ENCODE measurements at regions of chr10 and their contacts with region 1.

Region 1: GRCh38 chr10:91198781-91199180 is 21.7 kb upstream of the PCGF5 start:
- DNase-seq: no peak
- H3K4me3 Mint-ChIP-seq: peak overlapping the region; percentile 1
- H3K27ac Mint-ChIP-seq: peak overlapping the region; percentile 76
- H3K4me1 Mint-ChIP-seq: peaks cover 73% of the 10 kb centered on the region
- H3K27me3 Mint-ChIP-seq: no peaks in the 10 kb centered on the region

Region 2: GRCh38 chr10:90999512-91000172 is 199.1 kb before region 1 on chr10:
- intact Hi-C with region 1: no loop called
- DNase-seq: no peak
- H3K4me3 Mint-ChIP-seq: no peak overlapping the region
- H3K27ac Mint-ChIP-seq: no peak overlapping the region
- H3K4me1 Mint-ChIP-seq: no peaks in the 10 kb centered on the region
- H3K27me3 Mint-ChIP-seq: peaks cover 26% of the 10 kb centered on the region

Region 3: DNA sequence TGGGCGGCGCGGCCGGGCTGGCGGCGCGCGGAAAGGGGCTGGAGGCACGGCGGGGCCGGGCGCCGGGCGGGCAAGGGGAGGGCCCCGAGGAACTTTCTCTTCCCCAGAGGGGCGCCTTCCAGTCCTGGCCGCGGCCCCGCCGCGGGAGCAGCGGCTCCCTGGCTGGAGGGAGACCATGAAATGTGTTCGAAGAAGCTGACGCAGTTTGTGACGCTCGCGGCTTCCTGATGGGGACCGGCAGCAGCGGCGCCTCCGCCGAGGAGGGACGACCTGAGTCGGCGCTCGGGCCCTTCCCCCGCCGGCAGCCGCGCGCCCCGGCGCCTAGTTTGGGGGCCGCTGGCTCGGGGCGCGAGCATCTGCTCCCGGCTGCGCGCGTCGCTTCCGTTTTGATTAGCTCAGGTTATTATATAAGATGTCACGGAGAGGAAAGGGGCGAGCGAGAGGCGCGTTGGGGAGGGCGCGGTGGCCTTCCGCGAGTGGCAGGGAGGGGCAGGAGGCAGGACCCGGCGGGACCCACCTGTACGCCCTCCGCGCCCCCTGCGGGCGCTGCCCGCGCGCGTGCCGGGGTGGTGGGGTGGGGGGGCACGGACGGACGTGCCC is 35.4 kb before region 1 on chr10:
- intact Hi-C with region 1: loop called (anchors 1 kb)
- DNase-seq: peak; percentile 70
- H3K4me3 Mint-ChIP-seq: peak overlapping the region; percentile 85
- H3K27ac Mint-ChIP-seq: peak overlapping the region; percentile 76
- H3K4me1 Mint-ChIP-seq: peaks cover 34% of the 10 kb centered on the region
- H3K27me3 Mint-ChIP-seq: no peaks in the 10 kb centered on the region

Region 4: GRCh38 chr10:91210435-91210834 is 11.7 kb after region 1 on chr10:
- intact Hi-C with region 1: loop called (anchors 1 kb)
- DNase-seq: no peak
- H3K4me3 Mint-ChIP-seq: no peak overlapping the region
- H3K27ac Mint-ChIP-seq: no peak overlapping the region
- H3K4me1 Mint-ChIP-seq: peaks cover 42% of the 10 kb centered on the region
- H3K27me3 Mint-ChIP-seq: no peaks in the 10 kb centered on the region

Region 5: DNA sequence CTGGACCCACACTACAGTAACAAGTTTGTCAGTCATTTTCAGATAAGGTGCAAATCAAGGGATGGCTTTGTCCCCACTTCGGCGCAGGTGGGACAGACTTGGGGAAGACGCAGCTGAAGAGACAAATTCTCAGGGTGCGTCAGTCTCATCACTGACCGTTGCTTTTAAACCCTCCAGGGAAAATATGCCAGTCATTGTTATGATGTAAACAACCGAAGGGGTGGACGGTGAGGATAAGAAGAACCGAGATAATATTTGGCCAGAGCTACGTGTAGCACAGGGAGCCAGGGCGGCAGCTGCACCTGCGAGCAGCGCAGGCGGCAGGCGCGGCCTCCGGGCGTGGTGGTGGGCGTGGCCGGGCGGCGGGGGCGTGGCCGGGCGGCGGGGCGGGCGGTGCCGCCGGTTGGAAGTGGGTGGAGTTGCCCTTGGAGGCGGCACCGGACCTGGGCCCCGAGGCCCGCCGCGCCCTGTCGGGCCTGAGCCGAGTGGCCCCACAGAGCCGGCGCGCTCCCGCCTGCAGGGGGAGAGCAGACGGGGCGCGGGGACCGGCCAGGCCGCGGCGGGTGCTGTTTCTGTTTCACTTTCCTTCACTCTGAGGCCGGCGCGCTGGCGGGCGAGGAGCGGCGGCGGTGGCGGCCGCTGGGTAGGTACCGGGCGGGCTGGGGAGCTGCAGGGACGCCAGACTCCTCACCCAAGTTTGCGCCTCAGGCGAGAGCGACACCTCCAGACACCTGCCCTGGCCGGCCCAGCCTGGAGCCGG is 21.6 kb after region 1 on chr10 and contains the start of gene PCGF5:
- intact Hi-C with region 1: loop called (anchors 1 kb)
- DNase-seq: peak; percentile 88
- H3K4me3 Mint-ChIP-seq: peak within 1 kb of the TSS; percentile 92
- H3K27ac Mint-ChIP-seq: peak within 1 kb of the TSS; percentile 86
- H3K4me1 Mint-ChIP-seq: peaks cover 38% of the 10 kb centered on the region
- H3K27me3 Mint-ChIP-seq: no peaks in the 10 kb centered on the region
- total RNA-seq, gene PCGF5: 35.9 and 36.9 TPM in 2 replicates

Measured in activated T-helper 2 cell treated with anti-CD3 and anti-CD28 coated beads, Interferon-gamma antibody, Interleukin-2, Interleukin-4, amounts not matched to agents 10 μg/mL and 5 μg/mL and 100 μg/mL, durations not matched to agents 14 hours and 24 hours and 36 hours (primary cell).